Posterior vena cava (tissue), 2 donors: ENCODE measurements at regions of chr10 and their contacts with region 1.

Region 1: GRCh38 chr10:683448-684071 is 5.9 kb downstream of the DIP2C start:
- DNase-seq: peak; percentile 82

Region 2: DNA sequence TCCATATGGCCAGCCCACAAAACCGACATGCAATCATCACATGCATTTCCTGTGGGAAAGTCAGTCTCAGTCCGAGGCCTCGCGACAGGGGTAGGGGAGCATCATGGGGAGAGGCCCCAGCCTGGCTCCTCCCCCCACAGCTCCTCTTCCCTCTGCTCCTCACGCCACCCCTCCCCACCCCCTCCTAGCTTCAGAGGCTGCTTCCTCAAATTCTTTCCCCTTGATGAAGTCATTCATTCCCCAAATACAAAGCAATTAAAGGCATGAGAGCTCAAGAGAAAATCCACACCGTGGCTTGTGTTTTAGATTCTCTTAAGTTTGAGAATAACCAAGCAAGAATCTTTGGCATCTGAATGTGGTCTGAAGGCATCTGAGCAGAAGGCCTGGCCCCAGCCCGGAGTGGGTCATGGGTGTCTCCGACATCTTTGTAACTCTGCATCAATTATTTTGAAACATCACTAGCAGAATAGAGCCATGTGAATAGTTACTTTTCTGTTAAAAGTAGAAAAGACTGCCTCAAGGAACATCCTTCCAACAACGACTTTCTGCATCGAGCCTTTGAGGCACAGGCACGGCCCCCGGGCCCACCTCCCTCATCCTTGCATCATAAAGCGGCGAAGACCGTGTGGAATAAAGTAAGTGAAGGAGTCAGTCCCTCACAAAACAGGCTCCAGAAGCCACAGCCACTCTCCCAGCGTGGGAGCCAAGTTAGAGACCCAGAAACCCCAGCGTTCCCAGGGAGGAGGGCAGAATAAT is 85.0 kb before region 1 on chr10:
- intact Hi-C with region 1: loop called in 1 of 2 experiments (anchors 5 kb)
- DNase-seq: peak; percentile 68

Region 3: GRCh38 chr10:844552-844951 is 161.0 kb after region 1 on chr10:
- intact Hi-C with region 1: no loop called
- DNase-seq: no peak

Region 4: GRCh38 chr10:1920127-1920526 is 1236.6 kb after region 1 on chr10:
- intact Hi-C with region 1: no loop called
- DNase-seq: no peak